HEK293 (cell line): ENCODE measurements at regions of chr2 and their contacts with region 1.

Region 1: DNA sequence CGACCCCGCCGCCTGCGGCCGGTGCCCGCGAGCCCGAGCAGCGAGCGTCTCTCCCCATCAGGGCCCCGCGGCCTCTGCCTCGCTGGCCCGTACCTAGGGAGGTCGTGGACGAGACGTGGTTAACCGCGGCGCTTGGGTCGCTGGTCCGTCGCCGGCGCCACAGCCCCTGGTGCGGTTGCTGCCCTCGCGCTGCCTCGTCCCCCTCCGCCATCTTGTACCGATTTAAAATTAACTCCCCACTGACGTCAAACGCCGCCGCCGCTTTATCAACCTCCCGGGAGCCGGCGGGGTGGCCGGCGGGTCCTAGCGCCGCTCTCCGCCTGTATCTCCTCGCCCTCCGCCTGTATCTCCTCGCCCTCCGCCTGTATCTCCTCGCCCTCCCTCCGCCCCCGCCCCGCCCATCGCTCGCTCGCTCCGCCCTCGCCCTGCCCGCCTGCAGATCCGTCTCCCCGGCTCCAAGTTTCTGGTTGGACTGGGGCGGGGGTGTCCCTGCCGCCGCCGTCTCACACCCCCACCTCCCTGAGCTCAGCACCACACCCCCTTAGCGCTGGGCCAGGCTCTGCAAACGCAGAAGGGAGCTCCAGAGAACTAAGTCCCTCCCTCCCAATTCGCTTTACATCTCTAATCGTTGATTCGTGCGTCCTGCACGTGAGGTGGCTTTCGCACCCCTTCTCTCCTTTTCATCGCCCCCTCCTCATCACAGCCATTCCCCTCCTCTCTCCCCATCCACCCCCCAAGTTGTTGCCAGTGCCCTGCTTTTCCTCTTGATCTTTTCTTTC is at the start of gene ATL2:
- H3K4me3 ChIP-seq: peak within 1 kb of the TSS; percentile 92
- H3K27ac ChIP-seq: peak within 1 kb of the TSS; percentile 98
- H3K4me1 ChIP-seq: peaks cover 31% of the 10 kb centered on the region
- CTCF ChIP-seq: peak; percentile 24; the same call in 1 of the 2 replicates

Region 2: DNA sequence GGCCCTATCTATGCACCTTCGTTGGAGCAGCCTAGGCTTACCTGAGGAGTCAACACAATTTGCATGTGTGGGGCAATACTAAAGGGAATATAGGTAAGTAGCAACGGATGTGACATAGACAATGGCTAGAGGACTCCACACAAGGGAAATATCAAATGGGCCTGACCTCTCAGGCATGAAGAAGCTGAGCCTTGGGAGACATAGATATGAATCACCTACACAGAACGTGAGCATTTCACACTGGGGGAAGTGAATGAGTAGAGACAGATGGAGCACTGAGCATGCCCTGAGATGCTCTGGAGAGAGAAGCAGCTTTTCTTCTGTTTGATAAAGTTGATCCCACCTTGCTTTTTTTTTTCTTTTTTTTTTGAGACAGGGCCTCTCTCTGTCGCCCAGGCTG is 98.0 kb before region 1 on chr2:
- CTCF ChIA-PET with region 1: no interaction called
- POLR2A ChIA-PET with region 1: no interaction called
- H3K4me3 ChIP-seq: no peak overlapping the region
- H3K27ac ChIP-seq: no peak overlapping the region
- H3K4me1 ChIP-seq: no peaks in the 10 kb centered on the region
- CTCF ChIP-seq: no peak

Region 3: DNA sequence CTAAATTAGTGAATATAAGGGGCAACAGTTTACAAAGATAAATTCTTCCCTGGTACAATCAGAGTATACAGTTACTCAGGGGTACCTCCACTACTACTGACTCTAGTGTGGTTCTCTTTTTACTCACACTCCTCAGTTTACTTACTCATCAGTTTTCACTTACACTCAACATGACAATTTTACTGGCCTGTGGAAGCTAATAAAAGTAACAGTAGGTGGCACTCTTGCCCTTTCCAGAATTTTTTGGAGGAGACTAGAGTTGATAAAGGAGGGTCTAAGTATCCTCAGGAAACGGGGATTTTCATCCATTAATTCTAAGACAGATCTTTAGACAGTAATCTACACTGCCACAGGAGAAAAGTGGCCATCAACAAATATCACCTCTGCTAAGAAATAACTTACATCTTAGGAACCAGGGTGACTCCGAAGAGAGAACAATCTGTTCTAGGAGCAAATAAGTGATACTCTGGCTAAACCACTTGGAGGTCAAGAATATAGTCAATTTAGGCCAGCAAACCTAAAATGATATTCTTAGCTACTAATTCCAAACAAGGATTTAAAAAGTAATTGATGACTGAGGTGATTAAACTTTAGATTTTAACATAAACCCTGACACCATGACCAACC is 61.4 kb before region 1 on chr2:
- CTCF ChIA-PET with region 1: interaction called, 22 read pairs
- POLR2A ChIA-PET with region 1: interaction called, 5 read pairs
- H3K4me3 ChIP-seq: no peak overlapping the region
- H3K27ac ChIP-seq: no peak overlapping the region
- H3K4me1 ChIP-seq: peaks cover 3% of the 10 kb centered on the region; the same call in 1 of the 2 replicates
- CTCF ChIP-seq: no peak; the same call in 1 of the 2 replicates

Region 4: DNA sequence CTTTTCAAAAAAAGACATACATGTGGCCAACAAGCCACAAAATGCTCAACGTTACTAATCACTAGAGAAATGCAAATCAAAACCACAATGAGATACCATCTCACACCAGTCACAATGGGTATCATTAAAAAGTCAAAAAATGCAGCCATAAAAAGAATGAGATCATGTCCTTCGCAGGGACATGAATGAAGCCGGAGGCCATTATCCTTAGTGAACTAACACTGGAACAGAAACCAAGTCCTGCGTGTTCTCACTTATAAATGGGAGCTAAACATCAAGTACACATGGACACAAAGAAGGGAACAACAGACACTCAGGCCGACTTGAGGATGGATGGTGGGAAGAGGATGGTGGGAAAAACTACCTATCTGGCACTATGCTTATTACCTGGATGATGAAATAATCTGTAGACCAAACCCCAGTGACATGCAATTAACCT is 17.7 kb after region 1 on chr2:
- CTCF ChIA-PET with region 1: interaction called, 8 read pairs
- POLR2A ChIA-PET with region 1: interaction called, 26 read pairs
- H3K4me3 ChIP-seq: no peak overlapping the region
- H3K27ac ChIP-seq: peak overlapping the region; percentile 77
- H3K4me1 ChIP-seq: peaks cover 21% of the 10 kb centered on the region
- CTCF ChIP-seq: no peak

Region 5: GRCh38 chr2:38436227-38436664 is 59.0 kb after region 1 on chr2:
- CTCF ChIA-PET with region 1: no interaction called
- POLR2A ChIA-PET with region 1: no interaction called
- H3K4me3 ChIP-seq: no peak overlapping the region
- H3K27ac ChIP-seq: no peak overlapping the region; the same call in 1 of the 2 replicates
- H3K4me1 ChIP-seq: peaks cover 43% of the 10 kb centered on the region
- CTCF ChIP-seq: no peak

Region 6: DNA sequence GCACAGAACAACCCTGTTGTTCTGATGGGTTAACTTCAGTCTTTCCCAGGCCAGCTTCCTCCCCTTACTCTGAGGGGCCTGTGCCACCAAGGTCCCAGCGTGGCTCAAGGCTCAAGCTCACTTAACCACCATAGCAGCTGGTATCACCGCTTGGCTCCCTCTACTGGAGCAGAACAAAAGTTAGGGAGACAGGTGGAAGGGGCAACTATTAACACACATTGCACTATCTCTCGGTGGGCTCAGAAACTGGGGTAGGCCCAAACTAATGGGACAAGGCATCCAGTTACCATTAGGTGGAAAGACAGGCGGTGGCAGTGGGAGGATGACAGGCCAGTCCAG is 88.5 kb after region 1 on chr2:
- CTCF ChIA-PET with region 1: interaction called, 16 read pairs
- POLR2A ChIA-PET with region 1: interaction called, 3 read pairs
- H3K4me3 ChIP-seq: no peak overlapping the region
- H3K27ac ChIP-seq: no peak overlapping the region
- H3K4me1 ChIP-seq: peaks cover 16% of the 10 kb centered on the region
- CTCF ChIP-seq: peak; percentile 61; the same call in 1 of the 2 replicates